Transverse colon (tissue), 4 donors: ENCODE measurements at regions of chr4 and their contacts with region 1.

Region 1: GRCh38 chr4:38914854-38915253 is 47.2 kb downstream of the FAM114A1 start:
- DNase-seq: no peak
- H3K4me3 ChIP-seq: no peak overlapping the region
- H3K27ac ChIP-seq: no peak overlapping the region
- H3K4me1 ChIP-seq: peaks cover 0 to 17% (median 7%) of the 10 kb centered on the region in 4 donors
- H3K27me3 ChIP-seq: no peaks in the 10 kb centered on the region
- CTCF ChIP-seq: no peak
- EP300 ChIP-seq: no peak
- POLR2A ChIP-seq: no peak

Region 2: GRCh38 chr4:38930204-38930603 is 15.3 kb after region 1 on chr4:
- in situ Hi-C with region 1: no loop called
- intact Hi-C with region 1: loop called (anchors 1 kb)
- DNase-seq: no peak
- H3K4me3 ChIP-seq: no peak overlapping the region
- H3K27ac ChIP-seq: peak overlapping the region; percentile 40 to 76 (median 58)
- H3K4me1 ChIP-seq: peaks cover 0 to 13% (median 5%) of the 10 kb centered on the region in 4 donors
- H3K27me3 ChIP-seq: no peaks in the 10 kb centered on the region
- CTCF ChIP-seq: no peak
- EP300 ChIP-seq: no peak
- POLR2A ChIP-seq: no peak

Region 3: GRCh38 chr4:39124885-39125599 is 210.2 kb after region 1 on chr4:
- in situ Hi-C with region 1: loop called in 1 of 4 experiments (anchors 10 kb)
- intact Hi-C with region 1: no loop called
- DNase-seq: no peak
- H3K4me3 ChIP-seq: no peak overlapping the region
- H3K27ac ChIP-seq: no peak overlapping the region
- H3K4me1 ChIP-seq: no peaks in the 10 kb centered on the region
- H3K27me3 ChIP-seq: no peaks in the 10 kb centered on the region
- CTCF ChIP-seq: no peak
- EP300 ChIP-seq: no peak
- POLR2A ChIP-seq: no peak